ENCODE measurements at regions of chr6 and their contacts with region 1.

Region 1: GRCh38 chr6:152267967-152268845 is 369.0 kb downstream of the SYNE1 start:
- DNase-seq: no peak
- H3K4me3 ChIP-seq: no peak overlapping the region
- H3K27ac ChIP-seq: peak overlapping the region in 1 of 4 donors; percentile 14
- H3K4me1 ChIP-seq: peaks cover 14 to 48% (median 27%) of the 10 kb centered on the region in 3 donors
- H3K27me3 ChIP-seq: no peaks in the 10 kb centered on the region
- CTCF ChIP-seq: peak in 5 of 6 experiments; percentile 11 to 56 (median 48)
- POLR2A ChIP-seq: no peak

Region 2: DNA sequence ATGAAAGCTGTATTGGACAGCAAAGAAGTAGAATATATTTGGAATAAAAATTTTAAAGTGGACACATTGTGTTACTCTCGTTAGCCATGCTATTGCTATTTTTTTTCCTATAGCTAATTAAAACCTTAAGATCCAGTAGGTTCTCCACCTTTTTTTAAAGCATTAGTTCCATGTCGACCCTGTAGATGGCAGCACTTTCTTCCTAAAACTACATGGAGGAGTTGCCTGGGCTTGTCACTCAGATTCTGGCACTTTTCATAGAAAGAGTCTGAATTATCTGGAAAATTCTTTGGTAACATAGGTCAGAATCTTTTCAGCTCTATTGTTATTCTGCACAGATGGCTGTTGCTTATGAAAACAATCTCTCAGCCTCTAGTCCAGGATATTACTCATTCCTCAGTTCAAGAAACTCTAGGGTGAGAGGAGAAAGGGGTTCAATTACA is 502.7 kb before region 1 on chr6:
- intact Hi-C with region 1: loop called (anchors 10 kb)
- DNase-seq: no peak
- H3K4me3 ChIP-seq: no peak overlapping the region
- H3K27ac ChIP-seq: no peak overlapping the region
- H3K4me1 ChIP-seq: peaks cover 0 to 28% (median 0%) of the 10 kb centered on the region in 3 donors
- H3K27me3 ChIP-seq: no peaks in the 10 kb centered on the region
- CTCF ChIP-seq: peak in 5 of 6 experiments; percentile 56 to 79 (median 72)
- POLR2A ChIP-seq: no peak

Region 3: GRCh38 chr6:151847066-151847465 is 421.1 kb before region 1 on chr6:
- intact Hi-C with region 1: no loop called
- DNase-seq: no peak
- H3K4me3 ChIP-seq: no peak overlapping the region
- H3K27ac ChIP-seq: no peak overlapping the region
- H3K4me1 ChIP-seq: no peaks in the 10 kb centered on the region
- H3K27me3 ChIP-seq: no peaks in the 10 kb centered on the region
- CTCF ChIP-seq: no peak
- POLR2A ChIP-seq: no peak

Measured in esophagus squamous epithelium (tissue), 5 donors.